Sigmoid colon (tissue), 7 donors: ENCODE measurements at regions of chr21 and their contacts with region 1.

Region 1: DNA sequence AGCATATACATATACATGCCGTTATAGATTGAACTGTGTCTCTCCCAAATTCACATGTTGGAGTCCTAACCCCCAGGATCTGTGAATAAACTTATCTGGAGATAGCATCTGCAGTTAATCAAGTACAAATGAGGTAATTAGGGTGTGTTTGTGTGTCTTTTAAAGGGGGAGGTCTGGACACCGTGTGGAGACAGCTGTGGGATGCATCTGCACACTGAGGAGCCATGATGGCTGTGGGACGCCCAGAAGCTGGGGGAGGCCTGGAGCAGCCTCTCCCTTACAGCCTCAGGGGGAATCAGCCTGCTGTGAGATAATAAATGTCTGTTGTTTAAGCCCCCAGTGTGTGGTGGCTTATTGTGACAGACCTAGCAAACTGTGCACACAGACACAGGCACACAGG is 51.8 kb upstream of the COL18A1 start:
- DNase-seq: no peak
- H3K4me3 ChIP-seq: no peak overlapping the region
- H3K27ac ChIP-seq: no peak overlapping the region
- H3K4me1 ChIP-seq: peaks cover 0 to 31% (median 25%) of the 10 kb centered on the region in 4 donors
- H3K27me3 ChIP-seq: no peaks in the 10 kb centered on the region
- CTCF ChIP-seq: no peak
- EP300 ChIP-seq: no peak
- POLR2A ChIP-seq: no peak

Region 2: DNA sequence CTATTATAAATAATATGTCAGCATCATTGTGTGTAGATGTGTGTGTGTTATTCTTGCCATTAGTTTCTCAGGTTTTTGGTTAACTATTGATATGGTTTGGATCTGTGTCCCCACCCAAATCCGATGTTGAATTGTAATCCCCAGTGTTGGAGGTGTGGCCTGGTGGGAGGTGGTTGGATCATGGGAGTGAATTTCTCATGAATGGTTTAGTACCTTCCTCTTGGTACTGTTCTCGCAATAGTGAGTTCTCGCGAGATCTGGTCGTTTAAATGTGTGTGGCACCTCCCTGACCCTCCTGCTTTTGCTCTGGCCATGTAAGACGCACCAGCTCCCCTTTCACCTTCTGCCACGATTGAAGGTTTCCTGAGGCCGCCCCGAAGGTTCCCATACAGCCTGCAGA is 55.9 kb before region 1 on chr21:
- intact Hi-C with region 1: loop called (anchors 1 kb)
- DNase-seq: peak; percentile 40
- H3K4me3 ChIP-seq: no peak overlapping the region
- H3K27ac ChIP-seq: peak overlapping the region in 3 of 4 donors; percentile 94 to 98 (median 98)
- H3K4me1 ChIP-seq: peaks cover 4 to 67% (median 62%) of the 10 kb centered on the region in 4 donors
- H3K27me3 ChIP-seq: no peaks in the 10 kb centered on the region
- CTCF ChIP-seq: no peak
- EP300 ChIP-seq: no peak
- POLR2A ChIP-seq: no peak